ENCODE measurements at regions of chr1 and their contacts with region 1.

Region 1: GRCh38 chr1:11907275-11908094 is 18.7 kb downstream of the KIAA2013 start:
- DNase-seq: peak; percentile 90
- CTCF ChIP-seq: peak; percentile 93

Region 2: DNA sequence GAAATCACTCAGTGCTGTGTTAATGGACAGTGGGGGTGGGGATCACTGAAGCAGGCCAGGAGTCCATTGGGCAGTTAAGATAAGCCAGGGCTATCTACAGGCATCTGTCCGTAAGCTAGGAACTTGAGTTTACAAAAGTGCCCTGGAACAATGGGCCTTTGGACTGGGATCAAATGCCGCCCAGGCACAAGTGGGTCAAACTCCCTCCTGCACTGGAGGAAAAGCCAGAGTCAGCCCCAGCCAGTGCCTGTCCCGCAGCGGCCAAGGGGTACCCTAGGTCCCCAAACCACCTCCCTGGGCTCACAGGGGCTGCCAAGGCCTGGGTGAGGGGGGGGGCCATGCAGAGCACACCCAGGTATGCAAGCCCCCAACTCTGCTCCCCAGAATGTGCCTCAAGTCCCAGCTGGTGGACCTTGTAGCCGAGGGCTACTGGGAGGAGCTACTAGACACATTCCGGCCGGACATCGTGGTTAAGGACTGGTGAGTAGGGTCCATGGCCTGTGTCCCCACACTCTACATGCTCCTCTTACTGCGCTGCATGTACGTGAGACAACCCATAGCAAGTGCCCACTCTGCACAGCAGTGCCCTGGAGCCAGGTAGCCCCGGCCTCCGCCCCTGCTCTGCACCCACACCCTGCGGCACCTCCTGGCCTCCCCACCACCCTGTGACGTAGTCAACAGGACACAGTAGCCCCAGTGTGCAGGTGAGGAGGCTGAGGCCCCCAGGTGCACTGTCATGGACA is 235.8 kb before region 1 on chr1:
- CTCF ChIA-PET with region 1: no interaction called
- POLR2A ChIA-PET with region 1: no interaction called
- DNase-seq: no peak
- CTCF ChIP-seq: no peak

Region 3: DNA sequence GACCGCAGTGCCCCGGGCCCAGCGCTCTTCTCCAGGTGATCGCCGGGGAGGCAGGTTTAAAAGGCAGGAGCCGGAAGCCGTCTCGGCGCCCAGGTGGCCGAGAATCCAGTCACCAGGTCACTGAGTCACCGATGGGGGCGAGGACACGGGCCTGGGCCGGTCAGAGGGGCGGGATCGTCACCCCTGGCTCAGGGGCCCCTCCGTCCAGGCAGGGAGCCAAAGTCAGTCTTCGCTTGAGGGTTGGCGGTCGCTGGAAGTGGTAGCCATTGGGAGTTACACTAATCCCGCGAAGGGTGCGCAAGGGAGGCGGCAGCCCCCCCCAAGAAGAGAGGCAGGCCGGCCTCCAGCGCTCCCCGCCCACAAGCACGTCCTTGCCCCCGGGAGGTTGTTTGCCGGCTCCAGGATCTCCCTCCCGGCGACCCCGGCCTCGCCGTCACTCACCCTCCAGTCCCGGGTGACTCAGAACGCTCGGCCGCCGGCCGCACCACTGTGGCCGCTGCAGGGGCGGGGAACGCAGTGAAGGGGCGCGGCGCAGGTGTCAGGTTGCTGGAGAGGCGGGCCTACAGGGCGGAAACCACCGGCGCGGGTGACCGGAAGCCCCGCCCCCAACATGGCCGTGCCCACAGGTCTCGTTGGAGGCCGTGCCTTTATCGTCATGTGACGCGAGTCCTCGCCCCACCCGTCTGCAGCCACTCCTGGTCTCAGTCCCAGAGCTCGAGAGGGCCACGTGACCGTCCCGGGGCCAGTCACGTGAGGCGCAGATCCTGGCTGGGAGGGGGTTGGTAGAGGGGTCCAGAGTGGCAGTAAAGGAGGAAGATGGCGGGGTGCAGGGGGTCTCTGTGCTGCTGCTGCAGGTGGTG is 101.8 kb before region 1 on chr1 and contains the starts of genes CLCN6 and MTHFR:
- CTCF ChIA-PET with region 1: no interaction called
- POLR2A ChIA-PET with region 1: interaction called, 27 read pairs
- DNase-seq: peak; percentile 99
- CTCF ChIP-seq: no peak

Region 4: GRCh38 chr1:11920239-11920903 is 12.9 kb after region 1 on chr1:
- CTCF ChIA-PET with region 1: interaction called, 4 read pairs
- POLR2A ChIA-PET with region 1: interaction called, 53 read pairs
- DNase-seq: no peak
- CTCF ChIP-seq: no peak

Region 5: DNA sequence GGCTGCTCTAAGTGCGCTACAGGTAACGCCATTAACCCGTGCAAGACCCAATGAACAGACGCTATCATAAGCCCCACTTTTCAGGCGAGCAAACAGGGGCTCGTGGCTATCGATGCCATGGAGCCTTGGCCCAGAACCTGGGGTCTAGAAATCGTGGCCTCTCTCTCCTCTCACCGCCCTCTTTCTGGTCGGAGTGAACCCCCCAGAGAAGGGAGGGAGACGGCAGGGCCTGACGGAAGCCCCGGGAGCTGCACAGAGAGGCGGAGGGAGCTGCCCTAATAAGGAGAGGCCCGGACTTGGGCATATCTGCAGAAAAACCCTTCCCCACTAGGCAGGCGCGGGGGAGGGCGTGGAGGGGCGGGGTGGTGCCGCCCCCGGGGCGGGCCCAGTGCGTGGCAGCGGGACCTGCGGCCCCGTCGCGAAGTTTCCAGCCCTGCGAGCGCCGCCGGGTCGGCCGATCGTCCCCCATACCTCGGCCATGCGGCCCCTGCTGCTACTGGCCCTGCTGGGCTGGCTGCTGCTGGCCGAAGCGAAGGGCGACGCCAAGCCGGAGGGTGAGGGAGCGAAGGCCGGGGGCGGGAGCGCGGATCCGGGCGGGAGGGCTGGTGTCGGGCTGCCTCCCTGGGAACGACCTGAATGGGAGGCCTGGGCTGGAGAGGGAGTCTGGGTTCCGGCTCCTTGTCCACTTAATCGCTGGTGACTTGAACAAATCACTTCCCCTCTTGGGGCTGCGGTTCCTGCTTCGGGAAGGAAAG is 27.0 kb after region 1 on chr1 and contains the start of gene PLOD1:
- CTCF ChIA-PET with region 1: no interaction called
- POLR2A ChIA-PET with region 1: interaction called, 40 read pairs
- DNase-seq: peak; percentile 95
- CTCF ChIP-seq: no peak

Region 6: DNA sequence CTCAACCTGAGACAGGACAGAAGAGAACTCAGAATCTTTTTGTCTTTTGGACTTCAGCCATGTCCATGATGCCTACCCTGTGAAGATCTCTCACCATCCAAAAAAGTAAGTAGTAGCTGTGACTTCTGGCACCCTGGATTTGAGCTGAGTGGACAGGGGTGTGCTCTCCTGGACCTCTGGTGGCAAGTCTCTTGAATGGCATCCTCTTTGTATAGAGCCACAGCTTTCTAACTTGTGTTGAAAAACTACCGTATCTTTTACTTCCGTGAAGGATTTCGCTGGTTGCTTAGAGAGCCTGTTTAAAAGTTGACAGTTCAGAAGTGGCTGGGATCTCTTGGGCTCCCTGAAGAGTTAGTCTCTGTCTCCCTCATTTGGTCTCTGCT is 74.5 kb after region 1 on chr1:
- CTCF ChIA-PET with region 1: interaction called, 3 read pairs
- POLR2A ChIA-PET with region 1: interaction called, 10 read pairs
- DNase-seq: no peak
- CTCF ChIP-seq: no peak

Region 7: GRCh38 chr1:12031039-12031980 is 123.8 kb after region 1 on chr1:
- CTCF ChIA-PET with region 1: no interaction called
- POLR2A ChIA-PET with region 1: interaction called, 34 read pairs
- DNase-seq: peak; percentile 71
- CTCF ChIP-seq: peak; percentile 66

Region 8: DNA sequence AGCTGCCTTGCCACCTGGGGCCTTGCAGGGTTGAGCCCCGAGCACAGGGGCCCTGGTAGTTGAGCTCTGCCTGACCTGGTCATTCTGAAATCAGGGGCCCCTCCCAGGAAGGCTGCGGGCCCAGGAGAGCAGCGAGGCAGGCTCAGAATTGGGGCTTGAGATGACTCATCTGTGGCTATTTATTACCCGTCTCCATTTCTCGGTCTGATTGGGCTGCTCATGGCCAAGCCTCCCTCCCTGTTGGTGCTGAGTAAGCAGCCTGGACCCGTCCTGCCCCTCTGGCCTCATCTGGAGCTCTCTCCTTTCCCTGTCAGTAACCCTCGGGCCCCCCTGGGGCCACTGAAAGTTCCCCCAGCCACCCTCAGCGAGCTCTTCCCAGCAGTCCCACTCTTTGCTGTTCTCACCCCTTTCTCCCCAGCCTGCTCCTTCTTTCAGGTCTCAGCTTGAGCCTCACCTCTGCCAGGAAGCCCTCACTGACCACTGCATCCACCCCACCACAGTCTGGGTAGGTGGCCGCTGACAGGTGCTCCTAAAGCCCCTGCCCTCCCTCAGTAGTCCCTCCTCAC is 144.6 kb after region 1 on chr1:
- CTCF ChIA-PET with region 1: interaction called, 4 read pairs
- POLR2A ChIA-PET with region 1: interaction called, 13 read pairs
- DNase-seq: peak; percentile 86
- CTCF ChIP-seq: no peak